Activated naive CD8-positive, alpha-beta T cell treated with anti-CD3 and anti-CD28 coated beads, Interleukin-2, amount 10 ng/mL, durations not matched to agents 7 days and 5 days (primary cell): ENCODE measurements at regions of chr12 and their contacts with region 1.

Region 1: GRCh38 chr12:112012775-112013600 is at the starts of genes ERP29 and TMEM116:
- DNase-seq: peak; percentile 100
- ATAC-seq: peak; percentile 82
- H3K4me3 Mint-ChIP-seq: peak within 1 kb of the TSS; percentile 82
- H3K27ac Mint-ChIP-seq: peak within 1 kb of the TSS; percentile 98
- H3K4me1 Mint-ChIP-seq: peaks cover 35% of the 10 kb centered on the region
- H3K27me3 Mint-ChIP-seq: no peaks in the 10 kb centered on the region
- total RNA-seq, gene ERP29: 158 TPM
- total RNA-seq, gene TMEM116: 23.4 to 26.2 TPM

Region 2: DNA sequence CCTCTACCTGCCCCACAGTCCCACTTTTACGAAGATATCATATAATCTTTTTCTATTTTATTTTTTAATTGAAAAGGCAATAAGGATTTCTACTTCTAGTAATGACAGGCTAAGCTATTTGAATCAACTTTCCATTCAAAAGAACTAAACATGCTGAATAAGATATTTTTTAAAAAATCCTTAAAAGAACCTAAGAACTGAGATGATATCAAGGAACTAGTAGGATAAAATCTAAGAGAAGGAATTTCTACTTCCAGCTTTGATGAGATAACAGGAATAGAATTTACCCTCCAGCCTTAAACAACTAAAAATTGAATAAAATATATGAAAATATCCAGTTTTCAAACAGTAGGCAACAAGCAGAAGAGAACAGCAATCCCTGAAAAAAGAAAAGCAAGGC is 69.1 kb before region 1 on chr12:
- POLR2A ChIA-PET with region 1: interaction called, 27 read pairs
- DNase-seq: no peak
- ATAC-seq: no peak
- H3K4me3 Mint-ChIP-seq: no peak overlapping the region
- H3K27ac Mint-ChIP-seq: no peak overlapping the region
- H3K4me1 Mint-ChIP-seq: peaks cover 10% of the 10 kb centered on the region
- H3K27me3 Mint-ChIP-seq: no peaks in the 10 kb centered on the region

Region 3: DNA sequence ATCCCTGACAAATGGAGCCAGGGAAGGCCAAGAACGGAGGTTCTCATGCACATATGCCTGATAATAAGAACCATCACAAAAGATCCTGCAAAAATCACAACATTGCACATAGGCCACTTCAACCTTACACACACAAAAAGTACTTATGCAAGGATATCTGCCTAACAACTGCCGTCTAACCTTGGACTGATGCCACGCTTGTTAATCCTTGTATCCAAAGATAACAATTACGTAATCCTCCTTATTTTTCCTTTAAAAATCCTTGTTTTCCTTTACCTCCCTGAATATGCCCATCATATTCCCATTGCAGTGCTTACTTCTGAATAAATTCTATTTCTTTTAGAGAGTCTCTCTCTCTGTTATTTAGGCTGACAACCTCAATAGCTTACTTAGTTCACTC is 59.5 kb before region 1 on chr12:
- POLR2A ChIA-PET with region 1: interaction called, 22 read pairs
- DNase-seq: no peak
- ATAC-seq: no peak
- H3K4me3 Mint-ChIP-seq: no peak overlapping the region
- H3K27ac Mint-ChIP-seq: no peak overlapping the region
- H3K4me1 Mint-ChIP-seq: peaks cover 15% of the 10 kb centered on the region
- H3K27me3 Mint-ChIP-seq: no peaks in the 10 kb centered on the region

Region 4: DNA sequence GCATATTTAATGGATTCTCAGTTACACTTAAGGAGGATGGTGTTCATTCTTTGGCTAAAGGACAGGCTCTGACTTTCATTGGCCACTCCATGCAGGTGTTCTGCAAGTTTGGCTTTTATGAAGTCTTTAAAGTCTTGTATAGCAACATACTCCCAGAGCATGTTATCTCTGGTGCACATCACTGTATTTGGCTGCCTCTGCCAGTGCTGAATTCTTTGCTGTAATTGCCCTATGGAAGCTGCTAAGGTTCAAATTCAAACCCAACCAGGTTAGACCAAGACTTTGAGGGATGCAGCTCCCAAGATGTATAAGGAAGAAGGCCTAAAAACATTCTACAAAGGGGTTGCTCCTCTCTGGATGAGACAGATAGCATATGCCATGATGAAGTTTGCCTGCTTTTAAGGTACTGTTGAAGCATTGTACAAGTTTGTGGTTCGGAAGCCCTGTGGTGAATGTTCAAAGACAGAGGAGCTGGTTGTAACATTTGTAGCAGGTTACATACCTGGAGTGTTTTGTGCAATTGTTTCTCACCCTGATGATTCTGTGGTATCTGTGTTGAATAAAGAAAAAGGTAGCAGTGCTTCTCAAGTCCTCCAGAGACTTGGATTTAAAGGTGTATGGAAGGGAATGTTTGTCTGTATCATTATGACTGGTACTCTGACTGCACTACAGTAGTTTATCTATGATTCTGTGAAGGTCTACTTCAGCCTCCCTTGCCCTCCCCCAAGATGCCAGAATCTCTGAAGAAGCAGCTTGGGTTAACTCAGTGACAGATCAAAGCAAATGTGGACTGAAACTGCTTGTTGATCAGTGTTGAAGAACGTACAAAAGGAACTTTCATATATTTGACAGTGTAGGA is 19.5 kb before region 1 on chr12:
- POLR2A ChIA-PET with region 1: interaction called, 218 read pairs
- DNase-seq: no peak
- ATAC-seq: peak; percentile 82
- H3K4me3 Mint-ChIP-seq: peak overlapping the region; percentile 86
- H3K27ac Mint-ChIP-seq: peak overlapping the region; percentile 94
- H3K4me1 Mint-ChIP-seq: peaks cover 44% of the 10 kb centered on the region
- H3K27me3 Mint-ChIP-seq: no peaks in the 10 kb centered on the region

Region 5: DNA sequence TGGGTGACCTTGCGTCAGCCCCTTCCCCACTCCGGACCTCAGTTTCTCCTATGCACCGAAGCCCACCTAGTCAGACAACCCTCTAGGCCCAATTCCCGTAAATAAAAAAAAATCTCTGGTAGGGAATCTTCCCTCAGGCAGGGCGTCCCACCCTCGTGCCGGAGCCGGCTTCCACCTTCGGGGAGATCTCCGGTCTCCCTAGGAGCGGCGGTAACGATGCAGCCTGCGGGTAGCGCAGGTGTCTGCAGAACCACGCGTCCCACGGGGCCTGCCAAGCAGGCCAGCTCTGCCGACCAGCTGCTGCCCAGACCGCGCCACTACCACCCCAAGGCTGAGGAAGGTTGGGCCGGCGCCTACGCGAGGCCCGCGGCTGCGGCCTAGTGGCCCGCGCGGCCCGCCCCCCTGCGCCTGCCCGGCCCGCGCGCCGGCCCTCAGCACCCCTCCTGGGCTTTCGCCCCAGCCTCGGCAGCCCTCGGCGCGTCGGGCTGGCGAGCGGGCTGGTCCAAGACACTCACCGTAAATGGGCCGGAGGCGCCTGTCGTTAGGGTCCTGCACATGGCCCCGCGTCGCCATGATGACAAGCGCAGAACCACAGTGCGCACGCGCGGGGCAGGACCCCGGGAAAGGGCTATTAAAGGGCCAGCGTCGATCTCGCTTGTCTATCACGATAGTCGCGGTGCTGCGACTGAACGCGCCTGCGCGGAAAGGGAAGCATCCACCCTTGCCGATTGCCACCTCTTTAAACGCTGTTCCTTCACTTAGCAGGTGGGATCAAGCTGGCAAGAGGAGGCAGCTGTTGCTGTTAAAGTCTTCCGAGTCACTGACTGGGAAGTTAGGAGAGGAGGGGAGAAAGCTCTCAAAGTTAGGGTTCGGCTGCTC is 95.5 kb after region 1 on chr12 and contains the start of gene NAA25:
- POLR2A ChIA-PET with region 1: interaction called, 19 read pairs
- DNase-seq: peak; percentile 94
- ATAC-seq: peak; percentile 86
- H3K4me3 Mint-ChIP-seq: peak within 1 kb of the TSS; percentile 93
- H3K27ac Mint-ChIP-seq: peak within 1 kb of the TSS; percentile 98
- H3K4me1 Mint-ChIP-seq: peaks cover 36% of the 10 kb centered on the region
- H3K27me3 Mint-ChIP-seq: no peaks in the 10 kb centered on the region
- total RNA-seq, gene NAA25: 26.0 to 28.5 TPM

Region 6: DNA sequence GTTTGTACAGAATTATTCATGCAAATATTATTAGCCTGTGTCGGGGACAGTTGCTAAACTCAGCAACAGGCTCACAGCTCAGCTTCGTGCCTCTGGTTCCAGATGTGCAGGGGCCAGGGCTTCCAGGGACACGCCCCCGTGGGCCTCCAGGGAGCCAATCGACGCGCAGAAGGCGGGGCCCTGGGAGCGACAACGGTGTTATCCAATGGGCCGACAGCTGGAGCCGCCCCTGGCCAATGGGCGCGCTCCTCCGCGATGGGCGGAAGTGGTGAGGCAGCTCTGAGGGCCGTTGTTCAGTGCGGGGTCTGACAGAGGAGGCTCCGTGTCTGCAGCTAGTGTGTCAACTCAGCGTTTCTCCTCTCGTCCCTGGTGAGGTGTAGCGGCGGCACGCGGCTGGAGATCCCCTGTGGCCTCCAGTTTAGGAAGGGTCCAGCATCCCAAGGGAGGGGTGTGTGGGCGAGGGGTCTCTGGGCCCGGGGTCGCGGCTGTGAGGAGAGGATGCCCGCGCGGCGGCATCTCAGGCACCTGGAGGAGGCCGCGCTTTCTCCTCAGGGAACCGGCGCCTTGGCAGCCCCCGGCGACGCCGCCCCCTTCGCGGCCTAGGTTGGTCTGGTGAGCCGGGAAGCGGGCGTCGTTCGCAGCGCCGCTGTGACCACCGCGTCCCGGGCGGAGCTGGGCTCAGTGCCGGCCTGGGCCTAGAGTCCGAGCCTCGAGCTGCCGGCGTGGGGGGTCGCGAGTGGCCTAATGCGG is 112.4 kb after region 1 on chr12 and contains the start of gene TRAFD1:
- POLR2A ChIA-PET with region 1: interaction called, 23 read pairs
- DNase-seq: peak; percentile 99
- ATAC-seq: peak; percentile 99
- H3K4me3 Mint-ChIP-seq: peak within 1 kb of the TSS; percentile 87
- H3K27ac Mint-ChIP-seq: peak within 1 kb of the TSS; percentile 84
- H3K4me1 Mint-ChIP-seq: peaks cover 36% of the 10 kb centered on the region
- H3K27me3 Mint-ChIP-seq: peaks cover 4% of the 10 kb centered on the region
- total RNA-seq, gene TRAFD1: 69.7 to 70.3 TPM

Region 7: GRCh38 chr12:112130441-112130998 is 117.5 kb after region 1 on chr12:
- POLR2A ChIA-PET with region 1: interaction called, 23 read pairs
- DNase-seq: no peak
- ATAC-seq: peak; percentile 58
- H3K4me3 Mint-ChIP-seq: peak overlapping the region; percentile 80
- H3K27ac Mint-ChIP-seq: peak overlapping the region; percentile 87
- H3K4me1 Mint-ChIP-seq: peaks cover 50% of the 10 kb centered on the region
- H3K27me3 Mint-ChIP-seq: no peaks in the 10 kb centered on the region

Region 8: DNA sequence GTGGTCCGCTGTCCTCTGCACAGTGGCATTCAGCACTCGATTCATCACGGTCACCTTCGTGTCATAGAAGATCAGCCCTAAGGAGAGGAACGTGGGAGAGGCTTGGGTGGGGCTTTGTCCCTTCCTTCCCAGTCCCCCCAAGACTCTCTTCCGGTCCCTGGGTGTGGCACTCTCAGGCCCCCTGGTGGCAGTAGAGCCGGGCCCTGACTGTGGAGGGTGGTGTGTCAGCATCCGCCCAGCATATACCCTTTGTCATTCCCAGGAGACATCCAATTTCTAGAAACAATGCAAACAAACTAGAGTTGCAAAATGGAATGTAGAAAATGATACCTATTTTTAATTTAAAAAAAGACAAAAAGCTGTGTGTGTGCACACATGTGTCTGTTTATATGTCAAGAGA is 157.4 kb after region 1 on chr12:
- POLR2A ChIA-PET with region 1: no interaction called
- DNase-seq: peak; percentile 54
- ATAC-seq: peak; percentile 59
- H3K4me3 Mint-ChIP-seq: no peak overlapping the region
- H3K27ac Mint-ChIP-seq: peak overlapping the region; percentile 8
- H3K4me1 Mint-ChIP-seq: no peaks in the 10 kb centered on the region
- H3K27me3 Mint-ChIP-seq: no peaks in the 10 kb centered on the region